ENCODE measurements at regions of chr2 and their contacts with region 1.

Region 1: GRCh38 chr2:39996653-39997080 is 217.6 kb upstream of the THUMPD2 start:
- DNase-seq: no peak
- H3K4me3 ChIP-seq: no peak overlapping the region
- CTCF ChIP-seq: no peak
- POLR2A ChIP-seq: no peak

Region 2: GRCh38 chr2:38572167-38572566 is 1424.5 kb before region 1 on chr2:
- intact Hi-C with region 1: loop called (anchors 10 kb)
- DNase-seq: no peak
- H3K4me3 ChIP-seq: no peak overlapping the region
- CTCF ChIP-seq: no peak
- POLR2A ChIP-seq: no peak

Measured in lower leg skin (tissue), 4 donors.